ENCODE measurements at regions of chr22 and their contacts with region 1.

Region 1: DNA sequence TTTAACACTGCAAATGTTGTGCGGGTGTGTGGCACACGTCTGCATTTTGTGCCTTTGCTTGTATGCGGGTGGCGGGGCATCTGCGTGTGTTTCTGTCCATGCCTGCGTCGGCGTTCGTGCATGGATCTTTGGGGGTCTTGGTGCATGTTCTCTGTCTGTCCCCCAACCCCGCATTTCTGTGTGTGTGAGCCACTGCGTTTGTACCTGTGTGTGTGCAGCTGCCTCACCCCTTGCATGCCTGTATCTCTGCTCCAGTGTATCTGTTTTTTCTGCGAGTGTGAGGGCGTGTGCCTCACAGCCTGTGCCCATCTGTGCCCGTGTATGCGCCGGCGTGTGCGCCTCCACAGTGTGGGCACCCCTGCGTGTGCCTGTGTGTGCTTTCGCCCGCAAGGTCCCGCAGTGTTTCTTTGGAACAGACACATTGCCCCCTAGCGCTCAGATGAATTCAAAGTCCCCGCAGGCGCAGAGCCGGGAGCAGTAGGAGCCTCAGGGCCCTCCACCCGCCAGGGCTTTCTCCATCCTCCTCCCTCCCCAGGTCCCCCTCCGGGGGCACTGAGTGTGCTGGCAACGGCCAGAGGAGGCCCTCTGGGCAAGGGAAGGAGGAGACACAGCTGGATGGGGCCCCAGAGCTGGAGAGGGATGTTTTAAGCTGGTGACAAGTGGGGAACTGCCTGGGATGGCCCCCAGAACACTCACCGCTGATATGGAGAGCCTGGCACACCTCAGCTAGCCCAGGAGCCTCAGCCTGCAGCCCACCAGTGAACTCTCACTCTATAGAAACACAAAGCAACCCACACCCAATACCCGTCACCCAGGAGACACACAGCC is 3.1 kb upstream of the MN1 start:
- DNase-seq: peak; percentile 62
- H3K4me3 ChIP-seq: no peak overlapping the region
- H3K27ac ChIP-seq: no peak overlapping the region
- H3K4me1 ChIP-seq: peaks cover 2 to 27% (median 15%) of the 10 kb centered on the region in 4 donors
- H3K27me3 ChIP-seq: peaks cover 43% of the 10 kb centered on the region
- CTCF ChIP-seq: peak; percentile 60 to 67 (median 61)
- EP300 ChIP-seq: no peak
- POLR2A ChIP-seq: no peak

Region 2: GRCh38 chr22:26756675-26757293 is 1047.9 kb before region 1 on chr22:
- in situ Hi-C with region 1: loop called in 3 of 4 experiments (anchors 10 to 25 kb)
- intact Hi-C with region 1: loop called (anchors 5 kb)
- DNase-seq: peak; percentile 59
- H3K4me3 ChIP-seq: peak overlapping the region in 1 of 4 donors; percentile 19
- H3K27ac ChIP-seq: no peak overlapping the region
- H3K4me1 ChIP-seq: peaks cover 0 to 10% (median 0%) of the 10 kb centered on the region in 4 donors
- H3K27me3 ChIP-seq: no peaks in the 10 kb centered on the region
- CTCF ChIP-seq: peak; percentile 73 to 94 (median 90)
- EP300 ChIP-seq: no peak
- POLR2A ChIP-seq: no peak

Region 3: GRCh38 chr22:27405672-27406388 is 398.9 kb before region 1 on chr22:
- in situ Hi-C with region 1: loop called in 3 of 4 experiments (anchors 10 to 25 kb)
- intact Hi-C with region 1: no loop called
- DNase-seq: peak; percentile 57
- H3K4me3 ChIP-seq: no peak overlapping the region
- H3K27ac ChIP-seq: no peak overlapping the region
- H3K4me1 ChIP-seq: no peaks in the 10 kb centered on the region
- H3K27me3 ChIP-seq: no peaks in the 10 kb centered on the region
- CTCF ChIP-seq: peak; percentile 60 to 69 (median 69)
- EP300 ChIP-seq: no peak
- POLR2A ChIP-seq: no peak

Region 4: GRCh38 chr22:27416511-27417420 is 387.9 kb before region 1 on chr22:
- in situ Hi-C with region 1: loop called in 3 of 4 experiments (anchors 10 to 25 kb)
- intact Hi-C with region 1: no loop called
- DNase-seq: no peak
- H3K4me3 ChIP-seq: no peak overlapping the region
- H3K27ac ChIP-seq: no peak overlapping the region
- H3K4me1 ChIP-seq: peaks cover 0 to 8% (median 3%) of the 10 kb centered on the region in 4 donors
- H3K27me3 ChIP-seq: peaks cover 10% of the 10 kb centered on the region
- CTCF ChIP-seq: no peak
- EP300 ChIP-seq: no peak
- POLR2A ChIP-seq: no peak

Region 5: GRCh38 chr22:27866132-27867086 is 61.7 kb after region 1 on chr22:
- in situ Hi-C with region 1: no loop called
- intact Hi-C with region 1: no loop called
- DNase-seq: no peak
- H3K4me3 ChIP-seq: no peak overlapping the region
- H3K27ac ChIP-seq: peak overlapping the region; percentile 63 to 85 (median 80)
- H3K4me1 ChIP-seq: peaks cover 41 to 84% (median 57%) of the 10 kb centered on the region in 4 donors
- H3K27me3 ChIP-seq: no peaks in the 10 kb centered on the region
- CTCF ChIP-seq: no peak
- EP300 ChIP-seq: no peak
- POLR2A ChIP-seq: no peak

Region 6: GRCh38 chr22:28043266-28043665 is 238.6 kb after region 1 on chr22:
- in situ Hi-C with region 1: no loop called
- intact Hi-C with region 1: no loop called
- DNase-seq: no peak
- H3K4me3 ChIP-seq: no peak overlapping the region
- H3K27ac ChIP-seq: no peak overlapping the region
- H3K4me1 ChIP-seq: peaks cover 0 to 2% (median 0%) of the 10 kb centered on the region in 4 donors
- H3K27me3 ChIP-seq: no peaks in the 10 kb centered on the region
- CTCF ChIP-seq: no peak
- EP300 ChIP-seq: no peak
- POLR2A ChIP-seq: no peak